ENCODE measurements at regions of chr18 and their contacts with region 1.

Region 1: DNA sequence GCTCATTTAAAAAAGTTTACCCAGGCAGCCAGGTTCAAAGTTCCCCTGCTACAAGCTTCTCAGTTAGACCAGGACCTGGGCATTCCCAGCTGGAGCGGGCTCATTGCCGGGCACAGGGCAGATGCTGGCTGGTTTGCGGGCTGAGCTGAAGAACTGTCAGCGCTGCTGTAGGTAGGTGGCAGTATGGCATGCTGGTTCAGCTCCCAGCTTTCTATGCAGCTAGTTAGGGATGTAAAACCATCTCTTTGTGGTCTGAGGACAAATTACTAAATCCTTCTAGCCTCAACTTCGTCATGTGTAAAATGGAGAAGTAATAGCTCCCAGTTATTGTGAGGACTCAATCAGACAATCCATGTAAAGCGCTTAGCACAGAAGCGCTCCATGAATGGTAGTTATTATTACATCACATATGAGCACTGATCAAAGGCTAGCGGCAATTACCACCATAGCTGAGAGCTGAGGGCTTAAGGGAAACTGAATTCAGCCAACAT is 2.4 kb upstream of the LDLRAD4 start:
- DNase-seq: peak; percentile 20 to 77 (median 47)
- ATAC-seq: peak; percentile 46 to 56
- H3K4me3 Mint-ChIP-seq: peak overlapping the region; percentile 83 to 99 (median 94)
- H3K27ac Mint-ChIP-seq: peak overlapping the region; percentile 55 to 99 (median 93)
- H3K4me1 Mint-ChIP-seq: peaks cover 18 to 34% (median 32%) of the 10 kb centered on the region in 4 donors
- H3K27me3 Mint-ChIP-seq: peaks cover 0 to 22% (median 0%) of the 10 kb centered on the region in 5 donors

Region 2: DNA sequence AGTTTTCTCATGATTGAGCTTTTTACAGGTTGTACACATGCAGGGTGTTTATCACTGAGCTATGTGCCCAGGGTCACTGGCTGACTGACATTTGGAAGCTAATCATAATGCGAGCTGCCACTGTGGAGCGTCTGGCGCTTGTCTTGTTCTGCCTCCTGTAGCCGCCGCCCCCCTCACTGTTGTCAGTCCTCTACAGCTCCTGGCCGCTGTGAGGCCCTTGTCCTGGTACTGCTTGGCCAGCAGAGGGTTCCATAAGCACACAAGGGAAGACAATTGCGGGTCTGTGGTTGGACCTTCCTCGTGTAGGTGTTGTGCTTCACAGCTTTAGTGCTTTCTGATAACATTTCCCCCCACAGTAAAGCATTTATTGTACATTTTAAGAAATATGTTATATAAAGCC is 103.2 kb before region 1 on chr18:
- POLR2A ChIA-PET with region 1: no interaction called
- DNase-seq: peak in 4 of 10 donors; percentile 5 to 40 (median 10)
- ATAC-seq: peak; percentile 48 to 52
- H3K4me3 Mint-ChIP-seq: no peak overlapping the region
- H3K27ac Mint-ChIP-seq: peak overlapping the region in 2 of 10 donors; percentile 40 to 46
- H3K4me1 Mint-ChIP-seq: peaks cover 0 to 3% (median 0%) of the 10 kb centered on the region in 4 donors
- H3K27me3 Mint-ChIP-seq: no peaks in the 10 kb centered on the region

Region 3: DNA sequence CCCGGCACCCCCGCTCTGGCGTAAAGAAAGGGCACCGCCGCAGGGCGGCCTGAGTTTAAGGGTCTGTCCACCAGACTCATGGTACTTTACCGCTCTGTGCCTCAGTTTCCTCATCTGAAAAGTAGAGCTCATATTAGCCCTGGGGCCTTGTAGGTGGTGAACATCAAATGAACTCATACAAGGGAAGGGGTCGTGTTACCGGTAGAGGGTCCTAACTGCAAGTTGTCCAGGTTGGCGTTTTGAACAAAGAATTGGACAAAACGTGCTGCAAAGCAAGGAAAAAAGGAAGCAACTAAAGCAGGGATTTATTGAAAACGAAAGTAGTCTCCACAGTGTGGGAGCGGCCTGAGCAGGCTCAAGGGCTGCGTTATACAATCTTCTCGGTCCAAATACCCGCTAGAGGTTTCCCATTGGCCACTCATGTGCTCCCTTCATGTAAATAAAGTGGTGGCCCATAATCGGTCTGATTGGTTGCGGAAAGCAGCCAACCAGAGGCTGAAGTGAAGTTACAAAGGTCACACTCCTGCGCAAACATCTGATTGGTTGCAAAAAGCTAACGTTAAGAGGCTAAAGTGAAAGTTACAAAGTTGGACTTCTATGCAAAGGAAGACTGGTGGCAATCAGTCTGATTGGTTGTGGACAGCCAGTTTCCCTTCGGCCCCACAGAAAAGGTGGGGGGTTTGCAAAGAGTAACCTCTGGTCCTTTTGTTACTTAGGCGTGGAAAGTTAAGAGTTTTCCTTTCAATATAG is 78.3 kb before region 1 on chr18:
- POLR2A ChIA-PET with region 1: no interaction called
- DNase-seq: peak; percentile 28 to 91 (median 75)
- ATAC-seq: peak; percentile 81
- H3K4me3 Mint-ChIP-seq: peak overlapping the region; percentile 92 to 100 (median 98)
- H3K27ac Mint-ChIP-seq: peak overlapping the region; percentile 93 to 100 (median 99)
- H3K4me1 Mint-ChIP-seq: peaks cover 12 to 30% (median 26%) of the 10 kb centered on the region in 4 donors
- H3K27me3 Mint-ChIP-seq: no peaks in the 10 kb centered on the region

Region 4: DNA sequence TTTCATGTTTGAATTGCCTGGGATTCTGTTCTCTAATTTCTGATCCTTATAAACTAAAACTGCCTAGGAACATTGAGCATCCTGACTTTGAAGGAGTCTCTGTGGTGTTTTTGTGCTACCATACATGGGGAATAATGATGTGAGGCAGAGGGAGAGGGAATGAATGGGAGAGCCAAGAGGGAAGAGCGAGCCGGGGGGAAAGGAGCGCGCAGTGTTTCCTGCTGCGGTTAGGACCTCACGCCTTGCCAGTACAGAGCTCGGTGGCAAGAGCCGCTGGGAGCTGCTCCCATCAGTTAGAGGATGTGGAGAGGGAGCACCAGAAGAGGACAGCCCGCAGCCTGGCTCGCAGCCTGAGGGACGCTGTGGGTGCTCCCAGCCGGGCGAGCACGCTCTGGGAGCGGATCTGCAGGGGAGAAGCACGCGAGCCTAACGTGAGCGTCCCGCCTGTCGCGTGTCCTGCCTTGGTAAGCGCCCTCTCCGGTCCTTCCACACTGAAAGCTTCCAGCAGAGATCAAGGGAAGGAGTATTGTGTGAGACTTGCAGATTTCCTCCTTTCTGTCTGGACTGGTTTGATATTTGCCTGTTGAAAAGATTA is 395.6 kb after region 1 on chr18:
- POLR2A ChIA-PET with region 1: interaction called, 10 read pairs
- DNase-seq: no peak
- ATAC-seq: no peak
- H3K4me3 Mint-ChIP-seq: peak overlapping the region; percentile 76 to 93 (median 87)
- H3K27ac Mint-ChIP-seq: peak overlapping the region; percentile 90 to 98 (median 94)
- H3K4me1 Mint-ChIP-seq: peaks cover 47 to 85% (median 81%) of the 10 kb centered on the region in 4 donors
- H3K27me3 Mint-ChIP-seq: no peaks in the 10 kb centered on the region

Measured in naive thymus-derived CD8-positive, alpha-beta T cell (primary cell).